Ovary (tissue), 10 donors: ENCODE measurements at regions of chr19 and their contacts with region 1.

Region 1: GRCh38 chr19:41859618-41860418 is at the start of gene RPS19:
- DNase-seq: peak; percentile 99
- H3K4me3 ChIP-seq: peak within 1 kb of the TSS; percentile 71
- H3K27ac ChIP-seq: peak within 1 kb of the TSS; percentile 69 to 95
- H3K4me1 ChIP-seq: peaks cover 6% of the 10 kb centered on the region
- H3K27me3 ChIP-seq: no peaks in the 10 kb centered on the region
- CTCF ChIP-seq: peak; percentile 87 to 95 (median 95)
- EP300 ChIP-seq: peak; percentile 51
- POLR2A ChIP-seq: peak; percentile 80
- total RNA-seq, gene RPS19: 2,441 to 3,427 (median 2,873) TPM

Region 2: DNA sequence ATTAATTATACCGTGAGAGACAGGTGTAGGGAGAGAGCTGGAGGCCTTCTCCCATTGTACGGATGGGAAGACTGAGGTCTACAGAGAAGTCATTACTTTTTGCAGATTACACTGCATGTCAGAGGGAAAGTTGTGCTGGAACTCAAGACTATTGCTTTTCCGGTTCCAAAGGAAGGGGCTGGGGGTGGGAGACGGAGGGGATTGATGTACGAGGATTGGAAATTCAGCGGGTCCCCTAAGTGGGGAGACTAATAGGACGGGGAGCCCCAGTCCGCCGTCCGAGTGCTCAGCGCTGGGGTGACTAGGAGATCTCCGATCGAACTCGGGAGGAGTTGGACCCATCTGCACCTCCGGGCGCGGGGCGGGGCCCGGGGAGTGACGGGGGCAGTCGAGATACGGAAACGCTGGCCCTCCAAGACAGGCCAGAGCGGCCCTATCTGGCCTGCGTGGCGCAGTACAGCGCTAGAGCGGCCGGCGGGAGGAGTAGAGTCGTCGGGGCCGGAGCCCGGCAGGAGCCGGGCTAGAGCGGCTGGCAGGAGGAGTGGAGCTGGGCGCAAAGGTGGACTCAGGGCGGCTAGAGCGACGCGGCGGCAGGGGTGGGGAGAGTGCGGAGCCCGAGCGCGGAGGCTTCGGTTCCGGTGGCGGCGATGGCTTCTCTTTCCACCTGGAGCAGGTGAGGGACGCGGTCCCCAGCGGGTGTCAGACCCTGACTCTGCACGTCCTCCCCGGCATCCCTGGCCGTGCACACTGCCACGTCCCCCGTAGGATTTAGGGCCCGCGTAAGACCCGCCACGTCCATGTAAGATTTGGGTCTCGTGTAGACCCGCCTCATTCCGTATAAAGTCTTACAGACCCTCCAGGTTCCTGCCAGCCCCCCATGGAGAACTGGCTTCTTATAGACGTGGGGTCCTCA is 24.3 kb after region 1 on chr19:
- intact Hi-C with region 1: loop called in 1 of 4 experiments (anchors 1 kb)
- DNase-seq: peak; percentile 92 to 96 (median 93)
- H3K4me3 ChIP-seq: peak overlapping the region; percentile 87
- H3K27ac ChIP-seq: no peak overlapping the region
- H3K4me1 ChIP-seq: peaks cover 6% of the 10 kb centered on the region
- H3K27me3 ChIP-seq: no peaks in the 10 kb centered on the region
- CTCF ChIP-seq: peak in 2 of 3 donors; percentile 18 to 24
- EP300 ChIP-seq: no peak
- POLR2A ChIP-seq: peak; percentile 18

Region 3: DNA sequence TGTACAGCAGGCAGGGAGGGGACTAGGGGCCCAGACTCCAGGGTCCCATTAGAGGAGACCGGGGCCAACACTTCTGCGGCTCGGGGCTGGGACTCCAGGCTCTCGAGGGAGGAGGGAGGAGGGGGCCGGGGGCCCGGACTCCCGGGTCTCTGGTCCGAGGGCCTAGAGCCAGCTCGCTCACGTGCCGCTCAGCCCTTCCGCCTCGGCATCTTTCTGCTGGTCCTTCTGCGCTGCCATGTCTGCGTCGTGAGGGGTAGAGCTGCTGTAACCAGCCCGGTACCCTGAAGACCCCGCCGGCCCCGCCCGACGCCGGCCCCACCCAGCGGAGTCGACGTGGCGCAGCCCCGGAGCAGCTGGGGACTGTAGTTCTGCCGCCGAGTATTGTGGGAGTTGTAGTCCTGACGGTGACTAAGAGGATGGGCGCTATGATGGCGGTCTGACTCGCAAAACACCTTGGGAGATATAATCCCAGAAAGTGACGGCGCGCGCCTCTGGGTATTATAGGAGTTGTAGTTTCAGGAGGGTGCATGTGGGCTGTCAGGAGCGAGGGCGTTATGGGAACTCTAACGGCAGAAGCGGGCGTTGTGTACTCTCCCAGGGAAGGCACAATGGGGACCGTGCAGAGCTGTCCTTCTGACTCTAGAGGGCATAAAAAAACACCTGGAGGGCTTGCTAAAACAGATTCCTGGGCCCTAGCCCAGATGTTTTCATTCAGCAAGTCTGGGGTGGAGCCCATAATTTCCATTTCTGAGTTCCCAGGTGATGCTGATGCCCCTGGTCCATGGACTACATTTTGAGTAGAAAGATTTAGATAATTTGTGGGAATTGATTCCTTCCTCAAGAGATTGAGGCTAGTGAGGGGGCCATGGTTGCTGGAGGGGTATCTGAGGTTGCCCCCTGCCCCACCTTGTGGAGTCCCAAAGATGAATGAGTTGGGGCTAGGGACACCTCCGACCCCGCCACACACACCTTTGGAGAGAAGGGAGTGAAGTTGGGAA is 99.5 kb after region 1 on chr19 and contains the start of gene RABAC1:
- intact Hi-C with region 1: loop called in 1 of 4 experiments (anchors 5 kb)
- DNase-seq: peak; percentile 86 to 92 (median 90)
- H3K4me3 ChIP-seq: peak within 1 kb of the TSS; percentile 93
- H3K27ac ChIP-seq: peak within 1 kb of the TSS; percentile 82 to 87
- H3K4me1 ChIP-seq: peaks cover 1% of the 10 kb centered on the region
- H3K27me3 ChIP-seq: no peaks in the 10 kb centered on the region
- CTCF ChIP-seq: no peak
- EP300 ChIP-seq: no peak
- POLR2A ChIP-seq: peak; percentile 48
- total RNA-seq, gene RABAC1: 120 to 206 (median 147) TPM